PC-3 (cell line): ENCODE measurements at regions of chr1 and their contacts with region 1.

Region 1: GRCh38 chr1:110097887-110098681 is 14.2 kb upstream of the UBL4B start:
- DNase-seq: no peak
- ATAC-seq: no peak
- H3K4me3 ChIP-seq: no peak overlapping the region
- H3K27ac ChIP-seq: no peak overlapping the region
- H3K4me1 ChIP-seq: peaks cover 4% of the 10 kb centered on the region; the same call in 1 of the 2 replicates
- H3K27me3 ChIP-seq: 0 out of 2 replicates have a peak, but pooled peaks cover 7% of the 10 kb centered on the region
- CTCF ChIP-seq: no peak

Region 2: GRCh38 chr1:110019770-110020169 is 78.3 kb before region 1 on chr1:
- CTCF ChIA-PET with region 1: no interaction called
- POLR2A ChIA-PET with region 1: interaction called, 12 read pairs
- intact Hi-C with region 1: no loop called
- DNase-seq: no peak
- ATAC-seq: peak; percentile 31
- H3K4me3 ChIP-seq: no peak overlapping the region
- H3K27ac ChIP-seq: no peak overlapping the region
- H3K4me1 ChIP-seq: peaks cover 6% of the 10 kb centered on the region; the same call in 1 of the 2 replicates
- H3K27me3 ChIP-seq: no peaks in the 10 kb centered on the region
- CTCF ChIP-seq: no peak

Region 3: DNA sequence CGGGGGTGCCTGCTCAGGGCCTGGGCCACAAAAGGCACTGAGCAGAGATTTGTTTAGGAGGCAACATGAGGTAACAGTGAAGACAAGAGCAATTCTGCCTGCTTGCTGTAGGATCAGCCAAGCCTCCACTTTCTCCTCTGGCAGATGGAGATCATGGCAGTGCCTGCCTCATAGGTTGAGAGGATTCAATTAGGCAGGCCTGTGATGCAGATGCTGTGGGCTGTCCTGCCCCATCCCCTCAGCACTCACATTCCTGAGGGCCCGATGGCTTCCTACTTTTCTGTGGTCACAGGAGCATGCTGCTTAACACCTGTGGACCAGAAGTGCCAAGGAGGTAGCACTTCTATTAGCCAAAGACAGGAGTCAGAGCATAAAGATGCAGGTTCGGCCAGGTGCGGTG is 13.0 kb after region 1 on chr1:
- CTCF ChIA-PET with region 1: no interaction called
- POLR2A ChIA-PET with region 1: no interaction called
- intact Hi-C with region 1: no loop called
- DNase-seq: no peak
- ATAC-seq: no peak
- H3K4me3 ChIP-seq: no peak overlapping the region
- H3K27ac ChIP-seq: no peak overlapping the region
- H3K4me1 ChIP-seq: no peaks in the 10 kb centered on the region
- H3K27me3 ChIP-seq: peaks cover 60% of the 10 kb centered on the region
- CTCF ChIP-seq: no peak

Region 4: DNA sequence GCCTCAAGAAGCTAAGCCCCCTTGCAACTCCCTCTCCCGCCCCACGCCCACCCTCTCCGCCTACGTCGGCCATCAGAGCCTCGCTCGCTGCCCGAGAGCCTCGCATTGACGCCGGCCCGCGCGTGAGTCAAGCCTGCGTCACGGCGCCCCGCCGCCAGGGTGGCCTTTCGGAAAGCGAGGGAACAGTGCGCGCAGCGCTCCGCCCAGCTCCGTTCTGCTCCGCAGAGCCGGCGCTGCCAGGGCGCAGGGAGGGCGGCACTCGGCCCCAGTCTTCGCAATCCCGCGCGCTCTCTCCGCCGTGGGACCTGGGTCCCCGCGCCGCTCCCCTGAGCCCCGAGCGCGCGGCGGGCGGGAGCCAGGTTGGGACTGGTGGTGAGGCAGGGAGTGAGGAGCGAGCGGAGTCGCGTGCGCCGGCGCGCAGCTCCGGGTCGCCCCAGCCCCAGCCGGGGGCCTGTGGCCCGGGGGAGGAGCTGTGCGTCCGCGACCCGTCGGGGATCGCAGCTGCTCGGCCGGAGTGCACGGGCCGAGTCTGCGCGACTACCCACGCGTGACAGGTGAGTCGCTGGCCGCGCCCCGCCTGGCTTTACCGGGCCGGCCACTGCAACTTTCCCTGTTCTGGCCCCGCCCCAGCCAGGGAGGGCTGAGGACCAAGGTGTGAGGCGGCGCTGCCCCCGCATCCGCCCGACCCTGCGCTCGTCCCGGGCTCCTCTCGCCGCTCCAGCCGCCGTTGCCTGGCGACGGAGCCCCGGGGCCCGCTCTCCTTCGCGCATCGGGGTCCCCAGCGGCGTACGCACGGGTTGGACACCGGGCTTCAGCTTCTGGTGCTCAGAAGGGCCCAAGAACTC is 52.5 kb after region 1 on chr1 and contains the start of gene SLC6A17:
- CTCF ChIA-PET with region 1: no interaction called
- POLR2A ChIA-PET with region 1: no interaction called
- intact Hi-C with region 1: no loop called
- DNase-seq: no peak
- ATAC-seq: no peak
- H3K4me3 ChIP-seq: no peak within 1 kb of the TSS
- H3K27ac ChIP-seq: no peak within 1 kb of the TSS
- H3K4me1 ChIP-seq: no peaks in the 10 kb centered on the region
- H3K27me3 ChIP-seq: peaks cover 38% of the 10 kb centered on the region
- CTCF ChIP-seq: no peak
- total RNA-seq, gene SLC6A17: not detected in 2 replicates

Region 5: GRCh38 chr1:110449661-110450651 is 351.9 kb after region 1 on chr1:
- CTCF ChIA-PET with region 1: no interaction called
- POLR2A ChIA-PET with region 1: no interaction called
- intact Hi-C with region 1: no loop called
- DNase-seq: no peak
- ATAC-seq: no peak
- H3K4me3 ChIP-seq: no peak overlapping the region
- H3K27ac ChIP-seq: no peak overlapping the region
- H3K4me1 ChIP-seq: no peaks in the 10 kb centered on the region
- H3K27me3 ChIP-seq: peaks cover 71% of the 10 kb centered on the region
- CTCF ChIP-seq: no peak